ENCODE measurements at regions of chr19 and their contacts with region 1.

Region 1: DNA sequence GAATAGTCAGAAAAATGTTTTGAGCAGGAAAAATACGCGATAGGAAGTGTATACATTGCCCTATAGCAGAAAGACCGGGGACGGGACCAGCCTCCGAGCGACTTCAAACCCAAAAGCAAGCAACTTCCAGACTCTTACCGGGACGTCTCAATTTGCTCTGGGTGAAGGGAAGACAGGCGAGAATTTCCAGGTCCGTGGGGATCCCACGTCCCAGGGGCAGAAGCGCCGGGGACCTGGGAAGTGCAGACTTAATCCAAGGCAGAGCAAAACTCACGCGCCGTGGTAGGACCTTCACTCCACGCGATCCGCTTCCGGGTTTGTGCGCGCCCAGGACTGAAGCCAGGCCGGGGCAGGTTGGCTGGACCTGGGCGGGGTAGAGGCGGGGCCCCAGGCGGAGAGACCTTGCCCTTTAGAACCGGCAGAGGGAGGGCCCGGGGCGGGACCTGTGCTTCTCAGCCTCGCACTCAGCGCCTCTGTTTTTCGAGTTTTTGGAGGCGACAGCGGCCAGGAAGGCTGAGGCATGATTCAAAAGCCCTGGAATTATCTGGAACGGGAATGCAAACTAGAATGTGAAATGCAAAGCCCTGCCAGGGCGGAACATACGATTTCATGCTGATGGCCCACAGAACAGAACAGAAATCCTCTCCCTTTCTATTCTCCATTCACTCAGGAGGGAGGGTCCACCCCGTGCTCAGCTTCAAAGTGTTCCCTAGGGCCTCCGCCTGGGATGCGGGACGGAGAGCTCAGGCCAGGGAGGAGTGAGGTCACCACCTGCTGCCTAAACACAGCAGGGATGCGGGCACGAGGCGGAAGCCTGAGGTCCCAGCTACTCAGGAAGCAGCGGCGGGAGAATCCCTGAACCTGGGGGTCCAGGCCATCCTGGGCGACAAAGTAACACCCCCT is at the start of gene ZNF600:
- DNase-seq: peak; percentile 83
- ATAC-seq: peak; percentile 99
- H3K4me3 ChIP-seq: peak within 1 kb of the TSS; percentile 63 to 96 (median 78)
- H3K4me3 Mint-ChIP-seq: peak within 1 kb of the TSS; percentile 97
- H3K27ac ChIP-seq: peak within 1 kb of the TSS; percentile 40 to 69
- H3K27ac Mint-ChIP-seq: peak within 1 kb of the TSS; percentile 92
- H3K4me1 ChIP-seq: peaks cover 4 to 18% of the 10 kb centered on the region in 2 donors
- H3K4me1 Mint-ChIP-seq: peaks cover 31% of the 10 kb centered on the region
- H3K27me3 ChIP-seq: no peaks in the 10 kb centered on the region
- H3K27me3 Mint-ChIP-seq: no peaks in the 10 kb centered on the region
- CTCF ChIP-seq: peak; percentile 21
- total RNA-seq, gene ZNF600: 41.7 and 51.6 TPM in 2 replicates

Region 2: GRCh38 chr19:52690369-52691214 is 96.1 kb before region 1 on chr19:
- CTCF ChIA-PET with region 1: no interaction called
- POLR2A ChIA-PET with region 1: no interaction called
- intact Hi-C with region 1: loop called (anchors 2 kb)
- DNase-seq: peak; percentile 92
- ATAC-seq: peak; percentile 97
- H3K4me3 ChIP-seq: peak overlapping the region; percentile 76 to 91 (median 80)
- H3K4me3 Mint-ChIP-seq: peak overlapping the region; percentile 97
- H3K27ac ChIP-seq: peak overlapping the region; percentile 55 to 72
- H3K27ac Mint-ChIP-seq: peak overlapping the region; percentile 87
- H3K4me1 ChIP-seq: peaks cover 12 to 15% of the 10 kb centered on the region in 2 donors
- H3K4me1 Mint-ChIP-seq: peaks cover 26% of the 10 kb centered on the region
- H3K27me3 ChIP-seq: no peaks in the 10 kb centered on the region
- H3K27me3 Mint-ChIP-seq: no peaks in the 10 kb centered on the region
- CTCF ChIP-seq: no peak

Region 3: GRCh38 chr19:52734893-52735661 is 51.6 kb before region 1 on chr19 and contains the start of gene ZNF611:
- CTCF ChIA-PET with region 1: no interaction called
- POLR2A ChIA-PET with region 1: no interaction called
- intact Hi-C with region 1: loop called (anchors 1 kb)
- DNase-seq: peak; percentile 98
- ATAC-seq: peak; percentile 98
- H3K4me3 ChIP-seq: peak within 1 kb of the TSS; percentile 67 to 96 (median 90)
- H3K4me3 Mint-ChIP-seq: peak within 1 kb of the TSS; percentile 93
- H3K27ac ChIP-seq: peak within 1 kb of the TSS; percentile 74 to 91
- H3K27ac Mint-ChIP-seq: peak within 1 kb of the TSS; percentile 92
- H3K4me1 ChIP-seq: peaks cover 10 to 19% of the 10 kb centered on the region in 2 donors
- H3K4me1 Mint-ChIP-seq: peaks cover 23% of the 10 kb centered on the region
- H3K27me3 ChIP-seq: no peaks in the 10 kb centered on the region
- H3K27me3 Mint-ChIP-seq: no peaks in the 10 kb centered on the region
- CTCF ChIP-seq: peak; percentile 79
- total RNA-seq, gene ZNF611: 51.5 and 57.9 TPM in 2 replicates

Region 4: GRCh38 chr19:52749780-52750179 is 36.9 kb before region 1 on chr19:
- CTCF ChIA-PET with region 1: no interaction called
- POLR2A ChIA-PET with region 1: no interaction called
- intact Hi-C with region 1: no loop called
- DNase-seq: no peak
- ATAC-seq: no peak
- H3K4me3 ChIP-seq: no peak overlapping the region
- H3K4me3 Mint-ChIP-seq: no peak overlapping the region
- H3K27ac ChIP-seq: no peak overlapping the region
- H3K27ac Mint-ChIP-seq: no peak overlapping the region
- H3K4me1 ChIP-seq: peaks cover 0 to 3% of the 10 kb centered on the region in 2 donors
- H3K4me1 Mint-ChIP-seq: no peaks in the 10 kb centered on the region
- H3K27me3 ChIP-seq: no peaks in the 10 kb centered on the region
- H3K27me3 Mint-ChIP-seq: no peaks in the 10 kb centered on the region
- CTCF ChIP-seq: no peak

Region 5: GRCh38 chr19:52823676-52824075 is 37.0 kb after region 1 on chr19:
- CTCF ChIA-PET with region 1: no interaction called
- POLR2A ChIA-PET with region 1: no interaction called
- intact Hi-C with region 1: loop called (anchors 2 kb)
- DNase-seq: no peak
- ATAC-seq: no peak
- H3K4me3 ChIP-seq: no peak overlapping the region
- H3K4me3 Mint-ChIP-seq: no peak overlapping the region
- H3K27ac ChIP-seq: no peak overlapping the region
- H3K27ac Mint-ChIP-seq: no peak overlapping the region
- H3K4me1 ChIP-seq: peaks cover 4 to 8% of the 10 kb centered on the region in 2 donors
- H3K4me1 Mint-ChIP-seq: peaks cover 19% of the 10 kb centered on the region
- H3K27me3 ChIP-seq: no peaks in the 10 kb centered on the region
- H3K27me3 Mint-ChIP-seq: no peaks in the 10 kb centered on the region
- CTCF ChIP-seq: no peak

Measured in B cell (primary cell).